ENCODE measurements at regions of chrX and their contacts with region 1.

Region 1: GRCh38 chrX:153828723-153829548 is 1.4 kb downstream of the PDZD4 start:
- DNase-seq: peak in 1 of 10 donors; percentile 84

Region 2: GRCh38 chrX:153885968-153886903 is 57.3 kb after region 1 on chrX and contains the start of gene L1CAM:
- intact Hi-C with region 1: loop called (anchors 10 kb)
- DNase-seq: peak in 4 of 10 donors; percentile 23 to 83 (median 45)

Region 3: GRCh38 chrX:153971450-153972367 is 142.8 kb after region 1 on chrX and contains the start of gene HCFC1:
- intact Hi-C with region 1: no loop called
- DNase-seq: peak; percentile 73 to 98 (median 88)